HepG2 (cell line): ENCODE measurements at regions of chr22 and their contacts with region 1.

Region 1: DNA sequence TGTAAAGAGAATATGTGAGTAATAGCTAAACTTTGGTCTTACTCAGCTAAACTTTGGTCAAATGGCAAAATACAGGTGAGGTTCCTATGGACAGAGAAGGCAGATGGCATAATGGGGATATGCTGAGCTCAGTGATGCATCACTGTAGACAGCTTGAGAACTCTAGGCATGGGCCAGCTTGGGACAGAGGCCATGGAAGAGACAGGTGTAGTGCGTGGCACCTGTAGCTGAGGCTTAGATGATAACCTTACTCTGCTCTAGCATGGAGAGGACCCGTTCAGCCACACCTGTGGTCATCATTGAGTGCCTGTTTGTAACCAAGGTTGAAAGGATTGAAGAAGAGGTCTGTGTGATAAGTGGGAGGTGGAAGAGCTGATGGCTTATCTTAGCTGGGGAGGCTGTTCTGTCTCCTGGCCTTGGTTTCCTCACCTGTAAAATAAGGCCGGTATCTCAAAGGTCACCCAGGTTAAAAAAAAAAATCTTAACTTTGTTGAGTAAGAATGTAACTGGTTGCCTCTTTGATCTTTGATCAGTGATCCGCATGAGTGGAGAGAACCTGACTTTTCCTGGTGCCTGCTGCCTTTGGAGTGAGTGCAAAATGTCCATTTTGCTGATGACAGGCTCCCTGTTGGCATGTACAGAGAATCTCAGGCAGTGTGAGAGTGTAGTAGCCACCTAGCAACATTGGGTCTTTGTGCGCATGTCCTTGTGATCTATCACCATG is 48.6 kb downstream of the ZNRF3 start:
- DNase-seq: peak; percentile 63
- ATAC-seq: peak; percentile 76
- H3K4me3 ChIP-seq: peak overlapping the region in 1 of 3 experiments; percentile 16; a peak in 1 of 6 replicates
- H3K27ac ChIP-seq: peak overlapping the region; percentile 55
- H3K4me1 ChIP-seq: peaks cover 98% of the 10 kb centered on the region
- H3K27me3 ChIP-seq: no peaks in the 10 kb centered on the region
- CTCF ChIP-seq: no peak
- EP300 ChIP-seq: peak in 1 of 2 experiments; percentile 69; a peak in 2 of 4 replicates
- POLR2A ChIP-seq: no peak
- RAD21 ChIP-seq: no peak

Region 2: DNA sequence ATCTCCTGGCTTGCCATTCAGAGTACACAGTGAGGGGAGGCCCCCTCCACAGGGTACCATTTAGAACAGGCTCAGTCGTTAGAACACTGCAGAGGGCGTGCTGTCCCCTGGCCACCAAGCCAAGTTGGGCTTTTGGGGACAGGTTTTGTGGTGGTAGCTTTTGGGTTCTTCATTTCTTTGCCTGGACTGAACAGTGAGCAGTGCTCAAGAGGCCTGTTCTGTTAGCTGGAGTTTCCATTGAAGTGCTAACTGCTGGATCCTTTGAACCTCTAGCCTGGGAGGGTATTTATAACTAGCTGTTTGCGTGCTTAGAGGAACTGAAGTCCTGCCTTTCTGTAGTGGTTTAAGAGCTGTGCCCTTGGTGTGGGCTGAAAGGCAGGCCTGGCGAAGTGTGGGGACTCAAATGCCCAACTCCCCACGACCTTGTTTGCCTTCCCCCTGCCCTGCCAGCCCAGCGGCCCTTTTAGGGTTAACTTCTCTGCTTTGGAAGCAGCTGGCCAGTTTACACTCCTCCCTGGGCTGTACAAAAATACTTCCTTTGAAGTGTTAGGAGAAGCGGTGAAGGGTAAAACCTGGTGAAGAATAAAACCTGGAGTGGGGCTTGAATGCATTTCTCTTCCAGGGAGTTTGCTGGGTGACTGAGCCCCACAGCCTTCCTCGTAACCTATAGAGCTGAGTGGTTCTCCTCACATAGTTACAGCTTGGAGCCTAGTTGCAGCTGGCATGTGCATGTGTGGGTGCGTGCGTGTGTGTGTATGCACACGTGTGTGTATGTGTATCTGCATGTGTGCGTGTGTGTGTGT is 14.1 kb before region 1 on chr22:
- CTCF ChIA-PET with region 1: no interaction called
- POLR2A ChIA-PET with region 1: interaction called, 24 read pairs
- in situ Hi-C with region 1: no loop called
- intact Hi-C with region 1: no loop called
- DNase-seq: peak; percentile 86
- ATAC-seq: peak; percentile 72
- H3K4me3 ChIP-seq: peak overlapping the region in 1 of 3 experiments; percentile 44; a peak in 2 of 6 replicates
- H3K27ac ChIP-seq: peak overlapping the region; percentile 81
- H3K4me1 ChIP-seq: peaks cover 100% of the 10 kb centered on the region
- H3K27me3 ChIP-seq: no peaks in the 10 kb centered on the region
- CTCF ChIP-seq: peak; percentile 23; the same call in 1 of the 2 replicates
- EP300 ChIP-seq: peak in 1 of 2 experiments; percentile 91; a peak in 2 of 4 replicates
- POLR2A ChIP-seq: 0 out of 4 replicates have a peak, but pooled peaks of 1 of the 2 experiments have one; percentile 18
- RAD21 ChIP-seq: 0 out of 2 replicates have a peak, but pooled peaks have one; percentile 37